GM13977 (cell line): ENCODE measurements at regions of chr15 and their contacts with region 1.

Region 1: DNA sequence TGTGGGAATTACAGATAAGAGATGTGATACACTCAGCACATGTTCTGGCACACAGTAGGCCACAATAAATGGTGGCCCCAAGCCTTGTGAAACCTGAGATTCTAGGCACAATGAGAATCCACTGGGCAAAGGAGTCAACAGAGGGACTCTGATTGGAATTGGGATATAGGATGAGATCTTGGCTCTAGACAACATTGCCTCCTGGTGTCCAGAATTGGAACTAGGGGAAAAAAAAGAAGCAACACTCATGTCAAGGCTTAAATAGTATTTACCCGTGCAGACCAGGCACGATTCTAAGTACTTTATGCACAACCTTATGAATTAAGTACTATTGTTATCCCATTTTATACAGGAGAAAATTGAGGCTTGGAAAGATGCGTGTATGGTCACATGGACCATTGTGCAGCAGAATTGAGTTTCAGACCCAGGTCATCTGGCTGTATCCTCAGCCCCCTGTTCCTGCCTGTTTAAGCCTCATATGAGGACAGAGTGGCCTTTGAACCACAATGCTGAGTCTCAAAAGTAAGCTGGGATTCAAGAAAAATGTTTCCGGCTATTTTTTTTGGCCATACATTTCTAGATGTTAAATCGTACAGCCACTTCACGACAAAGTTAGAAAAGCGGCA is 124.8 kb downstream of the SV2B start:
- DNase-seq: peak; percentile 50
- CTCF ChIP-seq: peak; percentile 78

Region 2: GRCh38 chr15:91055548-91056331 is 169.1 kb before region 1 on chr15:
- in situ Hi-C with region 1: loop called (anchors 5 kb)
- DNase-seq: peak; percentile 58
- CTCF ChIP-seq: peak; percentile 88